ENCODE measurements at regions of chr22 and their contacts with region 1.

Region 1: DNA sequence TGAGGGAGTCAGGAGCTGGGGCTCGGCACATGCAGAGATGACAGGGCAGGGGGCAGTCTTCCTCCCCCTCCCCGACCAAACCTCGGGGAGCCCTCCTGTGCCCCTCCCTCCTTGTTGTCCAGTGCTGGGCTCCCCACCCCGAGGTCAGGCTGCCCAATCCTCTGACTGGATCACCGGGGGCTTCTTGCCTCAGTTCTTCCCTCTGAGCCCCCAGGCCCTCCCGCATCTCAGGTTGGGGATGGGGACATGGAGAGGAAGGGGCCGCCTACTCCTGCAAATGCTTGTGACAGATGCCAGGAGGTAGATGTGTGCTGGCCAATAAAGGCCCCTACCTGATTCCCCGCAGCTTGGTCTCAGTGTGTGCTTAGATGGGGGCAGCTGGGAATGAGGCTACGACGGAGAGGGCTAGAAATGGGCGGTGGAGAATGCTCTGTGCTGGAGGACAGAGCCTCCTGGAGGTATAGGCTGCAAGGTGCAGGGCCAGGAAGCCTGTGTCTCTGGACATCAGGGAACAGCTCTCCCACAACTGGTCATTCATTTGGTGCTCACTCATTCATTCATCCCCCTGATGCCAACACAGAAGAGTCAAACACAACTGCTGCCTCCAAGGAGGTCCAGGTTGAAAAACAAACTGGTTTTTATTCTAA is 8.4 kb downstream of the RHBDD3 start:
- DNase-seq: no peak
- H3K4me3 ChIP-seq: no peak overlapping the region
- H3K27ac ChIP-seq: no peak overlapping the region
- H3K4me1 ChIP-seq: no peaks in the 10 kb centered on the region
- H3K27me3 ChIP-seq: no peaks in the 10 kb centered on the region
- CTCF ChIP-seq: no peak
- EP300 ChIP-seq: no peak
- POLR2A ChIP-seq: no peak

Region 2: GRCh38 chr22:29062286-29062821 is 197.0 kb before region 1 on chr22:
- intact Hi-C with region 1: loop called (anchors 10 kb)
- DNase-seq: no peak
- H3K4me3 ChIP-seq: no peak overlapping the region
- H3K27ac ChIP-seq: no peak overlapping the region
- H3K4me1 ChIP-seq: no peaks in the 10 kb centered on the region
- H3K27me3 ChIP-seq: no peaks in the 10 kb centered on the region
- CTCF ChIP-seq: no peak
- EP300 ChIP-seq: no peak
- POLR2A ChIP-seq: no peak

Region 3: DNA sequence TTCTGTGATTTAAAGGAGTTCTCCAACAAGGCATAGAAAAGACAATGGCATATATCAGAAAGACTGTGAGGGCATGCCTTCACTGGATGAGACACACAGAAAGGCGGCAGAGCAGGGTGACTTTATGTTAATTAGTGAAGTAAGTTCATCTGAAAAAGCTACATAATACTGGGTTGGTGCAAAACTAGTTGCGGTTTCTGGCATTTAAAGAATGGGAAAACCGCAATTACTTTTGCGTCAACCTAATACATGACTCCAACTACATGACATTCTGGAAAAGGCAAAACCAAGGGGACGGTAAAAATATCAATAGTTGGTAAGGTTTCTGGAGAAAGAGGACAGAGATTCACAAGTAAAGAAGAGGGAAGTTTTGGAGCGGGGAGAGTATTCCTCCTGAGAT is 184.1 kb after region 1 on chr22:
- intact Hi-C with region 1: no loop called
- DNase-seq: no peak
- H3K4me3 ChIP-seq: no peak overlapping the region
- H3K27ac ChIP-seq: no peak overlapping the region
- H3K4me1 ChIP-seq: no peaks in the 10 kb centered on the region
- H3K27me3 ChIP-seq: peaks cover 0 to 20% (median 0%) of the 10 kb centered on the region in 3 donors
- CTCF ChIP-seq: no peak
- EP300 ChIP-seq: no peak
- POLR2A ChIP-seq: no peak